Calu3 (cell line): ENCODE measurements at regions of chr12 and their contacts with region 1.

Region 1: GRCh38 chr12:56007564-56008559 is 10.8 kb downstream of the SUOX start:
- DNase-seq: peak; percentile 76
- H3K4me3 Mint-ChIP-seq: peak overlapping the region; percentile 78
- H3K27ac Mint-ChIP-seq: peak overlapping the region; percentile 30
- H3K4me1 Mint-ChIP-seq: peaks cover 16% of the 10 kb centered on the region
- H3K27me3 Mint-ChIP-seq: no peaks in the 10 kb centered on the region
- CTCF ChIP-seq: no peak

Region 2: DNA sequence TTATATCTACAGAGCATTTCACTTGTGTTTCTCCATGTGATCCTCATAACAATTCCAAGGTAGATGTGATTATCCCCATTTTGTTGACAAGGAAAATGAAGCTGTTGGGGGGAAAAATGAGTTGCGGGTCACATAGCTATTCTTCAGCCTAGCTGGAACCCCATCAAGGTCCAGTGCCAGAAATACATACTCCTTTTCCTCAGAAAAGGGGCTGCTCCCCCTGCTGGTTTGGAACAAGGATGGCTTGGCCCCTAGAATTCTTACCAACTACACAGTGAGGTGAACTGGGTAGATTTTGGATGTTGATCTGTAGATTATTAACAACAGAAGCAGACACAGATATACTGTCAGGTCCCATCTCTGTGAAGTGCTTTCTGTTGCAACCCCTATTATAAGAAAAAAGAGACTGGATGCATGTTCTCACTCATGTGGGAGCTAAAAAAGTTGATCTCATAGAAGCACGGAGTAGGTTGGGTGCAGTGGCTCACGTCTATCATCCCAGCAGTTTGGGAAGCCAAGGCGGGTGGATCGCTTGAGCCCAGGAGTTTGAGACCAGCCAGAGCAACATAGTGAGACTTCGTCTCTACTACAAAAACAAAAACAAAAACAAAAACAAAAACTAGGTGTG is 21.9 kb after region 1 on chr12:
- CTCF ChIA-PET with region 1: interaction called, 10 read pairs
- intact Hi-C with region 1: no loop called
- DNase-seq: peak; percentile 78
- H3K4me3 Mint-ChIP-seq: no peak overlapping the region
- H3K27ac Mint-ChIP-seq: no peak overlapping the region
- H3K4me1 Mint-ChIP-seq: peaks cover 16% of the 10 kb centered on the region
- H3K27me3 Mint-ChIP-seq: no peaks in the 10 kb centered on the region
- CTCF ChIP-seq: peak; percentile 74

Region 3: DNA sequence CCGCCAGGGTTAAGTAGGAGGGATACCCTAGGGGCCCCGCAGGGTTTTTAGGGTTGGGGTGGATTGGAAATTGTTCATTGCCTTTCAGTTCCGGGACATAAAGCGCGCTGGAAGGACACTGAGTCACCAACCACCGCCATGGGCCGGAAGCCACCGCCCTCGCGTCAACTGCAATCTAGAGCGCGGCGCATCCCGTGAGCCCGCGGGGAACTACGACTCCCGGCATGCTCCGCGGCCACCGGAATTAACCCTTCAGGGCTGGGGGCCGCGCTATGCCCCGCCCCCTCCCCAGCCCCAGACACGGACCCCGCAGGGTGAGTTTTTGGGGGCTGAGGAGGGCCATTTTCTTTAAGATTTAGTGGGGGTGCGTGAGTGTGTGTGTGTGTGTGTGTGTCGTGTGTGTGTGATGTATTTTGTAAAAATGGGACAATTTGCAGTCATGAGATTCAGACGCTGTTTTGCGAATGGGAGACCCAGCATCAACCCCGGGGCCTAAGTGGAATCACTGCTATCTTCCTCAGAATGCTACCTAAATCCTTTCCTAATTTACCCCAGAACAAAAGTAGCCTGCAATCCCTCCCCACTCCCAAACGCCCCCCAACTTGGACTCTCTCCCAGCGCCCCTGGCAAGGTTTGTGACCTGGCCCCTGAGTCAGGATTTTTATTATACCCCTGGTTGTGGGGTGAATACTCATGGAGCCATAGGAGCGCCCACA is 144.6 kb after region 1 on chr12 and contains the start of gene MYL6B:
- CTCF ChIA-PET with region 1: no interaction called
- intact Hi-C with region 1: no loop called
- DNase-seq: peak; percentile 95
- H3K4me3 Mint-ChIP-seq: peak within 1 kb of the TSS; percentile 73
- H3K27ac Mint-ChIP-seq: peak within 1 kb of the TSS; percentile 78
- H3K4me1 Mint-ChIP-seq: peaks cover 14% of the 10 kb centered on the region
- H3K27me3 Mint-ChIP-seq: no peaks in the 10 kb centered on the region
- CTCF ChIP-seq: no peak
- total RNA-seq, gene MYL6B: 52.4 and 53.7 TPM in 2 replicates

Region 4: DNA sequence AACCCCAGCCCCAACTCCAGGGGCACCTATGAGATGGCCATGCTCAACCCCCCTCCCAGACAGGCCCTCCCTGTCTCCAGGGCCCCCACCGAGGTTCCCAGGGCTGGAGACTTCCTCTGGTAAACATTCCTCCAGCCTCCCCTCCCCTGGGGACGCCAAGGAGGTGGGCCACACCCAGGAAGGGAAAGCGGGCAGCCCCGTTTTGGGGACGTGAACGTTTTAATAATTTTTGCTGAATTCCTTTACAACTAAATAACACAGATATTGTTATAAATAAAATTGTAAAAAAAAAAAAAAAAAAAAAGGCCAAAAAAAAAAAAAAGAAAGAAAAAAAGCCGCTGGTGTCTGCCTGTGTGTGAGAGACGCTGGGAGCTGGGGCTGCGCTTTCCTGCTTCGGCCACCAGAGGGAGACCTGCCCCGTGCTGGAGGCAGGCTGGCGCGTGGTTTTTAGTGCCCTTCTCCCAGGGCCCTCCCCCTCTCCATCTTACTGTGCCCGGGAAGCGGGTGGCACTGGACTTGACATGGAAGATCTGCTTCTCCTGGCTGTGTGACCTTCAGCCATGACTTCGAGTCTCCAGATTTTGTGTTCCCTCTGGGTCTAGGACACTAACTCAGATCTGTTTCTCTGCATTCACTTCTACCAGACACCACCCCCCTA is 1205.3 kb after region 1 on chr12:
- CTCF ChIA-PET with region 1: no interaction called
- intact Hi-C with region 1: no loop called
- DNase-seq: peak; percentile 94
- H3K4me3 Mint-ChIP-seq: no peak overlapping the region
- H3K27ac Mint-ChIP-seq: no peak overlapping the region
- H3K4me1 Mint-ChIP-seq: peaks cover 37% of the 10 kb centered on the region
- H3K27me3 Mint-ChIP-seq: peaks cover 39% of the 10 kb centered on the region
- CTCF ChIP-seq: peak; percentile 83